Esophagus squamous epithelium (tissue), 5 donors: ENCODE measurements at regions of chr5 and their contacts with region 1.

Region 1: DNA sequence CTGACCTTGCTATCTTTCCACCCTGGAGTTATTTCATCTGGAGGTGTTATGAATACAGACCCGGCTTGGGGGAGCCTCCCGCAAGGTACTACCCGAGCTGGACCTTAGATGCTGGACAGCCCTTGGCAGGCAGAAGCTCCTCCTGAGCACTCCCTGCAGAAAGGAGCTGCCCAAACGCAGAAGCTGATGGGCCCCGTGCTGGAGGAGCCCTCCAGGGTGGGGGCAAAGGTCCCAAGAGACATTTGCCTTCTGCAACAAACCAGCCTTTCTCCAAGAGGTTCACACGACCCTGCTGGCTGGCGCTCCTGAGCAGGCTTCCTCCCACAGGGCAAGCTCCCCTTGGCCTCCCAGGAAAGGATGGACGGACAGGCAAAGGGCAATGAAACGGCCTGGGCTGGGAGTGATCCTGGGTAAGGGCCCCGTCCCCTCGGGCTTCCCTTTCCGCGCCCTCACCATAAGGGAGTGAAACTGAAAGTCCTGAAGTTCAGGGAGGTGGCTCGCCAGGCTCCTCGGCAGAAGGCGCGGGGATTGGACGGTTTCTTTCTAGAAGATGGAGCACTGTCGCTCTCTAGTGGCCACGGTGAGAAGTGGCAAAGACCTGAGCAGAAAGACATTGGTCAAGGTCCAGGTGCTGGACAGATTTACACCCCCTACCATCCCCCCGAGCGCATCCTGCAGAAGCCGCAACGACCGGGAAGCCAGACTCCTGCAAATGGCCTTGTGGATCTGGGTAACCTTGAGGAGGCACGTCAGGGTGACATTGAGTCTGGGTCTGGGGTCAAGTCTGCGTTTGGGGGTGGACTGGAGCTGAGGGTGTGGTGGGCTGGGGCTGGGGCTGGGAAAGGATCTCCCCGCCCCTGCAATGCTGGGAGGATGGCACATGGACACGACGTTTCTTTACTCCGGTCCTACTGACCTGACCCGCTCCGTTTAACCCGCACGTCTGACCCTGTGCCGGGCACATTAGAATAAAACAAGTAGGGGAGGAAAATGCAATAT is 56.4 kb downstream of the NEURL1B start:
- DNase-seq: peak; percentile 44
- H3K4me3 ChIP-seq: peak overlapping the region; percentile 47 to 66 (median 56)
- H3K27ac ChIP-seq: peak overlapping the region; percentile 74 to 84 (median 79)
- H3K4me1 ChIP-seq: peaks cover 12 to 80% (median 29%) of the 10 kb centered on the region in 3 donors
- H3K27me3 ChIP-seq: peaks cover 0 to 9% (median 0%) of the 10 kb centered on the region in 4 donors
- CTCF ChIP-seq: peak; percentile 87 to 97 (median 95)
- POLR2A ChIP-seq: peak in 2 of 4 donors; percentile 17 to 25

Region 2: DNA sequence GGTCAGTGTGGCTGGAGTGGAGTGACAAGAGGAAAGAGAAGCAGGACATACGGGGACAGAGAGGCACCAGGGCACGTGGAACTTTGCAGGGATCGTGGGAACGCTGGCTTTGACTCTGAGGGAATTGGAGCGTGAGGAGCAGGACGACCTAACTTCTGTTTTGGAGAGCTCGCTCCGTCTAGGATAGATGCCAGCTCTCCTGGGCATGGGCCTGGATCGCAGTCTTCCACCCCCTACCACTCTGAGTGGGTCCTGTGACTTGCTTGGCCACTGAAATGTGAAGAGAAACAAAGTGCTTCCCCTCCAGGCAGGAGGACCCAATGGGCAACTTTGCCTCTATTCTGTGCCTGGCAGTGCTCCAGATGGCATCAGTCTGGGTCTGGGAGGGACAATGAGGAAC is 234.4 kb before region 1 on chr5:
- intact Hi-C with region 1: loop called (anchors 5 kb)
- DNase-seq: no peak
- H3K4me3 ChIP-seq: no peak overlapping the region
- H3K27ac ChIP-seq: no peak overlapping the region
- H3K4me1 ChIP-seq: peaks cover 0 to 8% (median 0%) of the 10 kb centered on the region in 3 donors
- H3K27me3 ChIP-seq: peaks cover 0 to 4% (median 0%) of the 10 kb centered on the region in 4 donors
- CTCF ChIP-seq: no peak
- POLR2A ChIP-seq: no peak

Region 3: GRCh38 chr5:172479044-172479783 is 218.2 kb before region 1 on chr5:
- intact Hi-C with region 1: loop called (anchors 2 kb)
- DNase-seq: no peak
- H3K4me3 ChIP-seq: no peak overlapping the region
- H3K27ac ChIP-seq: peak overlapping the region in 3 of 4 donors; percentile 39 to 65 (median 65)
- H3K4me1 ChIP-seq: peaks cover 0 to 29% (median 6%) of the 10 kb centered on the region in 3 donors
- H3K27me3 ChIP-seq: no peaks in the 10 kb centered on the region
- CTCF ChIP-seq: peak; percentile 73 to 99 (median 96)
- POLR2A ChIP-seq: no peak